ENCODE measurements at regions of chr12 and their contacts with region 1.

Region 1: GRCh38 chr12:25126746-25127145 is 68.2 kb downstream of the DNAI7 start:
- DNase-seq: no peak
- H3K4me3 ChIP-seq: no peak overlapping the region
- H3K4me1 ChIP-seq: peaks cover 4% of the 10 kb centered on the region
- H3K27me3 ChIP-seq: no peaks in the 10 kb centered on the region; the same call in 1 of the 2 replicates

Region 2: GRCh38 chr12:24991209-24992049 is 135.3 kb before region 1 on chr12:
- in situ Hi-C with region 1: loop called (anchors 5 kb)
- DNase-seq: peak in 1 of 2 experiments; percentile 79
- H3K4me3 ChIP-seq: no peak overlapping the region
- H3K4me1 ChIP-seq: no peaks in the 10 kb centered on the region
- H3K27me3 ChIP-seq: no peaks in the 10 kb centered on the region

Measured in HAP-1 (cell line).